ENCODE measurements at regions of chr16 and their contacts with region 1.

Region 1: DNA sequence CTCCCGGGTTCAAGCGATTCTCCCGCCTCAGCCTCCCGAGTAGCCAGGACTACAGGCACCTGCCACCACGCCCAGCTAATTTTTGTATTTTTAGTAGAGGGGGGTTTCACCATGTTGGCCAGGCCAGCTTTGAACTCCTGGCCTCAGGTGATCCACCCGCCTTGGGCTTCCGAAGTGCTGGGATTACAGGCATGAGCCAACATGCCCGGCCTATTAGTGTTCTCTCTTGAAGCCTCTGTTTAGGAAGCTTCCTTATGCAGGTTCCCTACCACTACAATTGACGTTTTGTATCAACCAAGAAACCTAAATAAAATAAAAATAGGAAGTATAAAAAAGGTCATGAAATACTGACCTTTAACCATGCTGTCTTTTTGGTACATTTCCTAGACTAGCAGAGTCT is 16.0 kb downstream of the CHST5 start:
- DNase-seq: no peak
- H3K4me3 Mint-ChIP-seq: no peak overlapping the region
- H3K27ac Mint-ChIP-seq: no peak overlapping the region
- H3K4me1 Mint-ChIP-seq: peaks cover 13% of the 10 kb centered on the region
- H3K27me3 Mint-ChIP-seq: peaks cover 1% of the 10 kb centered on the region

Region 2: DNA sequence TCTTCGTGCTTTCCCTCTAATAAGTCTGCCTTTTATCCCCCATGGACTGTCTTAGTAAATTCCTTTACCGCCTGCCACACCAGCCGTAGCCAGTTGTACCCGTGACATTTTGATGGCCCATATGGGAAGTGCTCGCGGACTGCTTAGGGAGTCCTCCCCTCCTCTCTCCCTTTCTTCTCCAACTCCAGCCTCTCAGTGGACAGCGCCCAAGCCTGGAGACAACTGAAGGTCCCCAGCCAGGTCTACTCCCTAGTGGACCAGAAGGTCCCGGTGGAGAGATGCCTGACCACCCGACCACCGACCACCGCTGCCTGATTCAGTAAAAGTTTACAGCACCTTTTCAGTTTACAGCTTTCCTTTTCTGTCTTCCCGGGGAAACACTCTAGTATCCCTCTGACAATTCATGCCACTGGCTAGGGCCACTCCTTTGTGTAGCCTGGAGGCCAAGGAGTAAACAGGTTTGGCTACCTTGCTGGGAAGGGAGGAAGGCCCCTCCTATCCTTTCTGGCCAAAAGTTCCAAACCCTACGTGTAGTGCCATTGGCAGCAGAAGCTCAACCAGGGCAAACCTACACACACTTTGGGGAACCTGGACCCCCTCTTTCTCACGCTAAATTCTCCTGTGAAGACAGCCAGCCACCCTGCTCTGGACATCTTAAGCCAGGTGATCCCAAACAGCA is 330.9 kb before region 1 on chr16:
- CTCF ChIA-PET with region 1: no interaction called
- POLR2A ChIA-PET with region 1: no interaction called
- DNase-seq: no peak
- H3K4me3 Mint-ChIP-seq: no peak overlapping the region
- H3K27ac Mint-ChIP-seq: no peak overlapping the region
- H3K4me1 Mint-ChIP-seq: no peaks in the 10 kb centered on the region
- H3K27me3 Mint-ChIP-seq: peaks cover 2% of the 10 kb centered on the region

Region 3: DNA sequence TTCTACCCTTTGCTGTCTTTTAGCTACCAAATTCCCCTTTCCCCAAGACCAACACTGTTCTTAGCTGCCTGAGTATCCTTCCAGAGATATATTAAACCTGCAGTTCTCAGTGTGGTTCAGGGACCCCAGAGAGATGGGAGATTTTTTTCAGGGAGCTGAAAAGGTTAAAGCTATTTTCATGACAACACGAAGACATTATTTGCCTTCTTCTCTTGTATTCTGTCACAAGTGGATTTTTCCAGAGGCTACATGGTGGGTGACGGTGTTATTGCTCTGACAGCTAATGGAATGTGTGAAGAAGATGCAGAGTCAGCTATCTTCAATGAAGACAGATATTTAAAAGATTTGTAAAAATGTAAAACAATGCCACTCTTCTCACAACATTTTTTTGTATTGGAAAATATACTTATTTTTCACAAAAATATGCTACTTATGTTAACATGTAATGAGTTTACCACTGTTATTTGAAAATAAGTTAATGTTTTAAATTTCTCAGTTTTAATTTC is 155.5 kb before region 1 on chr16:
- CTCF ChIA-PET with region 1: no interaction called
- POLR2A ChIA-PET with region 1: no interaction called
- DNase-seq: no peak
- H3K4me3 Mint-ChIP-seq: no peak overlapping the region
- H3K27ac Mint-ChIP-seq: no peak overlapping the region
- H3K4me1 Mint-ChIP-seq: no peaks in the 10 kb centered on the region
- H3K27me3 Mint-ChIP-seq: no peaks in the 10 kb centered on the region

Region 4: DNA sequence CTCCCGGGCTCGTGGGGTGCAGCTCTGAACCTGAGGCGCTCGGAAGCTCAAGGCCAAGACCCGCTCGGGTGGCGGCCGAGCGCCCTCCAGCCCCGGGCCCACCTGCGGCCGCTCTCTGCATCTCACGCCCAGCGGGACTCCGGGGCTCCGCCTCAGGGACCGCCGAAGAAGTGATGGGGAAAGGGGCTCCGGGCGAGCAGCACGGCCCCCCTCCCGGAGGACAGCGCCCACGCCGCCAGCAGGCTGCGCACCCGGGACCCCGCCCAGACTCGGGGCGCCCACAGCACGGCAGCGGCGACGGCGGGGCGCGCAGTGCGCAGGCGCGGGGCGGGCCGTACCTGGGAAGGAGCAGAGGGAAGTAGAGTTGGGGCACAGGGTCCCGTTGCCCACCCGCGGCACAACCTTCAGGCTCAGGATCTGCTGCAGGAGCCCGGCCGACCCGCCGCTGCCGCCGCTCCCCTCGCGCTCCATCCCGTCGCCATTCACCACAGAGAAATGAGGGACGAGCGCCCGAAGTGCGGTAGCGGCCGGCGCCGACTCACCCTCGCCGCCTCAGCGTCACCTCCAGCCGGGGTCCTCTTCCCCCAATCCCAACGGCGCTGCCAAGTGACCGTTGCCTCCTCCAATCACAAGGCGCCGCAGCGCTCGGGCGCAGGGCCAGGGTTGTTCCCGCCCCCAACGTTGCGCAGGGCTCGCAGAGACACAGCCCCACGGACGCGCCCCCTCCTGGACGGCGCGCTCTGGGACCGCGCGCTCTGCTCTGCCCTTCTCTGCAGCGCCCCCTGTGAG is 55.6 kb before region 1 on chr16 and contains the start of gene TMEM170A:
- CTCF ChIA-PET with region 1: interaction called, 15 read pairs
- POLR2A ChIA-PET with region 1: interaction called, 3 read pairs
- DNase-seq: peak; percentile 99
- H3K4me3 Mint-ChIP-seq: peak within 1 kb of the TSS; percentile 90
- H3K27ac Mint-ChIP-seq: peak within 1 kb of the TSS; percentile 92
- H3K4me1 Mint-ChIP-seq: peaks cover 42% of the 10 kb centered on the region
- H3K27me3 Mint-ChIP-seq: no peaks in the 10 kb centered on the region
- total RNA-seq, gene TMEM170A: 30.8 to 33.9 TPM

Region 5: GRCh38 chr16:75550211-75550662 is 30.4 kb after region 1 on chr16:
- CTCF ChIA-PET with region 1: interaction called, 16 read pairs
- POLR2A ChIA-PET with region 1: interaction called, 3 read pairs
- DNase-seq: peak; percentile 42
- H3K4me3 Mint-ChIP-seq: no peak overlapping the region
- H3K27ac Mint-ChIP-seq: no peak overlapping the region
- H3K4me1 Mint-ChIP-seq: peaks cover 24% of the 10 kb centered on the region
- H3K27me3 Mint-ChIP-seq: no peaks in the 10 kb centered on the region

Region 6: DNA sequence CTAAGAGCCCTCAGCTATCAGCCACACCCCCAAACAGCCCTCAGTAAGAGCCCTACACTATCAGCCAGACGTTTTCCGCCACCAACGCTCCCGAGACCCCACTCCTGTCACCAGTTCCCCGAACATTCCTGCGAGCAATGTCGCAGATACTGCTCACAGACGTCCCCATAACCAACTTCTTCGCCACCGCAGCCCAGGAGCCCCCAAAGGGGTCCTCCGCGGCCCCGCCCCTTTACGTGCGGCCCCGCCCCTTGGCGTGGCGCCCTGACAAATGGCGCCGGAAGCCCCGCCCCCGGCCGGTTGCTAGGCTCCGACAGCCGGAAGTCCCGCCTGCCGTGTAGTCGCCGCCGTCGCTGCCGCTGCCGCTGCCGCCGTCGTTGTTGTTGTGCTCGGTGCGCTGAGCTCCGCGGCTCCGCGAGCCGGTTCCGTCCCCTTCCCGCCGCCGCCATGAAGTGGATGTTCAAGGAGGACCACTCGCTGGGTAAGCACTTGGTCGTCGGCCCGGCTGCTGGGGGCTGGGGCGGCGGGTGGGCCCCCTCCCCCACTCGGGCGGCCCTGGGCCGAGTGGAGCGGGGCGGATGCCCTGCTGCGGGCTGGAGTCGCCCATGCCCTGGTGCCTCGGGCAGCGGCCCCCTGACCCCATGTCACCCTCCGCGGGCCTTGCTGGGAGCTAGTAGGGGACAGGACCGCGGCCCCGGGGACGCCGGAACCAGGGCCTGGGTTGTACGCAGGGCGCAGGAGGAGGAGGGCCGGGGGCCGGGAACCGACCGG is 46.3 kb after region 1 on chr16 and contains the start of gene GABARAPL2:
- CTCF ChIA-PET with region 1: interaction called, 16 read pairs
- POLR2A ChIA-PET with region 1: interaction called, 5 read pairs
- DNase-seq: peak; percentile 92
- H3K4me3 Mint-ChIP-seq: peak within 1 kb of the TSS; percentile 100
- H3K27ac Mint-ChIP-seq: peak within 1 kb of the TSS; percentile 87
- H3K4me1 Mint-ChIP-seq: peaks cover 38% of the 10 kb centered on the region
- H3K27me3 Mint-ChIP-seq: peaks cover 14% of the 10 kb centered on the region
- total RNA-seq, gene GABARAPL2: 84.9 to 86.2 TPM

Measured in activated CD4-positive, alpha-beta memory T cell treated with anti-CD3 and anti-CD28 coated beads, Interleukin-2, amount 10 ng/mL, durations not matched to agents 7 days and 5 days (primary cell).